Activated CD4-positive, alpha-beta memory T cell treated with anti-CD3 and anti-CD28 coated beads for 36 hours (primary cell): ENCODE measurements at regions of chr5 and their contacts with region 1.

Region 1: DNA sequence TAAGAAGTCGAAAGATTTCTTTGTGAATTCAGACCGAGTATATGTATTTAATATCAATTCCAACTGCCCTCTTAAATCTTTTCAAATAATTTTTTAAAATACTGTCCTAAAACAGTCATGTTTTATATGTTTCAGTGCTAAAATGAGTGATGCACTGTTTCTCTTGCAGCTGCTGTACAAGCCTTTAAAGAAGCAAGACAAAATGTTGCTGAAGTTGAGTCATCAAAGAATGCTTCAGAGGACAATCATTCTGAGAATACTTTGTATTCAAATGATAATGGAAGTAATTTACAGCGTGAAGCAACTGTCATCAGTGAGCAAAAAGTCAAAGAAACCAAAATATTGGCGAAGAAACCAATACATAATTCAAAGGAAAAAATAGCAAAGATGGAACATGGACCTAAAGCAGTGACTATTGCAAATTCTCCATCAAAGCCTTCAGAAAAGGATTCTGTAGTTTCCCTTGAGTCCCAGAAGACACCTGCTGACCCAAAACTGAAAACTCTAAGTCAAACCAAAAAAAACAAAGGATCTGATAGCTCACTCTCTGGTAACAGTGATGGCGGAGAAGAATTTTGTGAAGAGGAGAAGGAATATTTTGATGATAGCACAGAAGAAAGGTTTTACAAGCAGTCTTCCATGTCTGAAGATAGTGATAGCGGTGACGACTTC is 58.0 kb downstream of the LOX start:
- DNase-seq: no peak
- H3K4me3 Mint-ChIP-seq: peak overlapping the region; percentile 13
- H3K27ac Mint-ChIP-seq: peak overlapping the region; percentile 42
- H3K4me1 Mint-ChIP-seq: peaks cover 14% of the 10 kb centered on the region
- H3K27me3 Mint-ChIP-seq: no peaks in the 10 kb centered on the region

Region 2: GRCh38 chr5:121731377-121731776 is 288.7 kb before region 1 on chr5:
- CTCF ChIA-PET with region 1: no interaction called
- POLR2A ChIA-PET with region 1: no interaction called
- intact Hi-C with region 1: no loop called
- DNase-seq: no peak
- H3K4me3 Mint-ChIP-seq: no peak overlapping the region
- H3K27ac Mint-ChIP-seq: no peak overlapping the region
- H3K4me1 Mint-ChIP-seq: no peaks in the 10 kb centered on the region
- H3K27me3 Mint-ChIP-seq: no peaks in the 10 kb centered on the region

Region 3: GRCh38 chr5:121797681-121798518 is 222.2 kb before region 1 on chr5:
- CTCF ChIA-PET with region 1: no interaction called
- POLR2A ChIA-PET with region 1: no interaction called
- intact Hi-C with region 1: no loop called
- DNase-seq: no peak
- H3K4me3 Mint-ChIP-seq: no peak overlapping the region
- H3K27ac Mint-ChIP-seq: no peak overlapping the region
- H3K4me1 Mint-ChIP-seq: no peaks in the 10 kb centered on the region
- H3K27me3 Mint-ChIP-seq: no peaks in the 10 kb centered on the region

Region 4: DNA sequence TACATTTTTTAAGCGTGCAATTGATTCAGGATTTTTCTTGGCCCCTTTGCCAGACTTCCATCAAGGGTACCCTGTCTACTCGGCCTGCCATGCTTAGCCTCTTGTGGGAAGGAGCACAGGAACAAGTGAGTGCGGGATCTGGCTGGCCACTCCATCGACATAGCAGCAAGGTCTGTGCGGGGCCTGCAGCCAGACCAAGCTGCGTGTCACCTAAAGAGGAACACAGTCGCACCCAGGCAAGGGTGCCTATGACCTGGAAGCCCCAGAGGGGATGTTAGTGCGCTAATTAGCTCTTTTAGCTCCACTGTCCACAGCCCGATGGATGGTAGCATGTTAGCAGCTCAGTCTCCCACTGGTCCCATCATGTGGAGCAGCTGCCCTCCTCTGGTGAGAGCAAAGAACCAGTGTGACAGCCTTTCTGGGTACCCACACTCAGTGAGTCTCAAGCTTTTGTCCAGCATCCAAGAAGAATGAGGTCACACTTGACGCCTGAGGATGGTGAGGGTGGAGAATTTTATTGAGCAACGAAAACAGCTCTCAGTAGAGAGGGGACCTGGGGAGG is 129.7 kb before region 1 on chr5:
- CTCF ChIA-PET with region 1: no interaction called
- POLR2A ChIA-PET with region 1: no interaction called
- intact Hi-C with region 1: no loop called
- DNase-seq: no peak
- H3K4me3 Mint-ChIP-seq: no peak overlapping the region
- H3K27ac Mint-ChIP-seq: no peak overlapping the region
- H3K4me1 Mint-ChIP-seq: no peaks in the 10 kb centered on the region
- H3K27me3 Mint-ChIP-seq: no peaks in the 10 kb centered on the region

Region 5: DNA sequence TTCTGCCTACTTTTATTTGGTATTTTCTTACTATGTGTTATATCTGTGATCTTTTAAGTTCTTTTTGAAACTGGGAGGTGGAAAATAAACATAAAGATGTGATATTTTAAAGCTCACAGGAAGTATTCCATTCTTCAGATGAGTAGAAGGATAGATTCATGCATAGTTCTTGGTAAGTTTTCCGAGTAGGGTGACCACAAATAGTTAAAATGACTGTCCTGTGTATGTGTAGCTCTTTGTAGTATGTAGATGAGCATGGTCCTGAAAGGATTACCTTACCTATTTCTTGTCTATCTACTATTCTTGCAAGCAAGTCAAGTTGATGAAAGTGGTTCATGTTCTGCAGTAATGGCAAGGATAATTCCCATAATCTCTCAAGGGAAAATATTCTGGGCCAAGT is 10.6 kb before region 1 on chr5:
- CTCF ChIA-PET with region 1: interaction called, 4 read pairs
- POLR2A ChIA-PET with region 1: no interaction called
- intact Hi-C with region 1: loop called (anchors 1 kb)
- DNase-seq: no peak
- H3K4me3 Mint-ChIP-seq: no peak overlapping the region
- H3K27ac Mint-ChIP-seq: no peak overlapping the region
- H3K4me1 Mint-ChIP-seq: peaks cover 28% of the 10 kb centered on the region
- H3K27me3 Mint-ChIP-seq: no peaks in the 10 kb centered on the region

Region 6: GRCh38 chr5:122182491-122182921 is 162.5 kb after region 1 on chr5:
- CTCF ChIA-PET with region 1: no interaction called
- POLR2A ChIA-PET with region 1: no interaction called
- intact Hi-C with region 1: loop called (anchors 5 kb)
- DNase-seq: no peak
- H3K4me3 Mint-ChIP-seq: no peak overlapping the region
- H3K27ac Mint-ChIP-seq: no peak overlapping the region
- H3K4me1 Mint-ChIP-seq: peaks cover 7% of the 10 kb centered on the region
- H3K27me3 Mint-ChIP-seq: peaks cover 10% of the 10 kb centered on the region